Caco-2 (cell line): ENCODE measurements at regions of chr18 and their contacts with region 1.

Region 1: GRCh38 chr18:36572135-36572856 is 256.5 kb downstream of the TPGS2 start:
- DNase-seq: peak in 1 of 2 experiments; percentile 5
- H3K4me3 ChIP-seq: no peak overlapping the region
- H3K4me3 Mint-ChIP-seq: no peak overlapping the region
- H3K27ac Mint-ChIP-seq: no peak overlapping the region
- H3K4me1 ChIP-seq: no peaks in the 10 kb centered on the region
- H3K4me1 Mint-ChIP-seq: no peaks in the 10 kb centered on the region
- H3K27me3 ChIP-seq: no peaks in the 10 kb centered on the region
- H3K27me3 Mint-ChIP-seq: peaks cover 7% of the 10 kb centered on the region
- CTCF ChIP-seq: peak in 1 of 2 experiments; percentile 25

Region 2: GRCh38 chr18:36296650-36297416 is 275.5 kb before region 1 on chr18:
- CTCF ChIA-PET with region 1: no interaction called
- POLR2A ChIA-PET with region 1: no interaction called
- intact Hi-C with region 1: loop called (anchors 2 kb)
- DNase-seq: peak; percentile 40 to 49
- H3K4me3 ChIP-seq: peak overlapping the region; percentile 26
- H3K4me3 Mint-ChIP-seq: no peak overlapping the region
- H3K27ac Mint-ChIP-seq: no peak overlapping the region
- H3K4me1 ChIP-seq: no peaks in the 10 kb centered on the region
- H3K4me1 Mint-ChIP-seq: no peaks in the 10 kb centered on the region
- H3K27me3 ChIP-seq: no peaks in the 10 kb centered on the region
- H3K27me3 Mint-ChIP-seq: peaks cover 8% of the 10 kb centered on the region
- CTCF ChIP-seq: peak; percentile 14 to 32

Region 3: GRCh38 chr18:36492604-36493329 is 79.5 kb before region 1 on chr18:
- CTCF ChIA-PET with region 1: no interaction called
- POLR2A ChIA-PET with region 1: no interaction called
- intact Hi-C with region 1: no loop called
- DNase-seq: no peak
- H3K4me3 ChIP-seq: no peak overlapping the region
- H3K4me3 Mint-ChIP-seq: no peak overlapping the region
- H3K27ac Mint-ChIP-seq: no peak overlapping the region
- H3K4me1 ChIP-seq: no peaks in the 10 kb centered on the region
- H3K4me1 Mint-ChIP-seq: peaks cover 6% of the 10 kb centered on the region
- H3K27me3 ChIP-seq: no peaks in the 10 kb centered on the region
- H3K27me3 Mint-ChIP-seq: peaks cover 6% of the 10 kb centered on the region
- CTCF ChIP-seq: no peak

Region 4: GRCh38 chr18:36608107-36608506 is 35.8 kb after region 1 on chr18:
- CTCF ChIA-PET with region 1: no interaction called
- POLR2A ChIA-PET with region 1: no interaction called
- intact Hi-C with region 1: no loop called
- DNase-seq: no peak
- H3K4me3 ChIP-seq: no peak overlapping the region
- H3K4me3 Mint-ChIP-seq: no peak overlapping the region
- H3K27ac Mint-ChIP-seq: no peak overlapping the region
- H3K4me1 ChIP-seq: no peaks in the 10 kb centered on the region
- H3K4me1 Mint-ChIP-seq: no peaks in the 10 kb centered on the region
- H3K27me3 ChIP-seq: no peaks in the 10 kb centered on the region
- H3K27me3 Mint-ChIP-seq: peaks cover 4% of the 10 kb centered on the region
- CTCF ChIP-seq: no peak